Colonic mucosa (tissue), 4 donors: ENCODE measurements at regions of chr1 and their contacts with region 1.

Region 1: DNA sequence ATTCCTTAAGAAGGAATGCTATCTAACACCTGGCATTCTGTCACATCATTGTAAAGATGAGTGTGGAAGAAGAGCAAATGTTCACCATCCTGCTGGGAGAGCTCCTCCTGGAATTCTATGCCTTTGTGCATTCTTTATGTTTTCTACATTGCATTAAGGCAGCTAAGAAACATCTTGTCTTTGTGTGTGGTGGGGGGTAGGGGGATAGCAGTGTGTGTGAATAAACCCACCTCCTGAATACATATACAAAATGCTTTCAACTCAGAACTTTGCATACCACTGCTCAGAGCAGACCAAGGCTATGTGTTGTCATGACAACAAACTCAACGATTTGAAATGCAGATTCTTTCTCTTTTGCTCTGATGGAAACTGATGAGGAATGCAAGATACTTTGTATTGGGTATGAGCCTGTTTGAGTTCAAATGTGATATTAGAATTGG is 193.6 kb upstream of the KAZN start:
- DNase-seq: no peak
- H3K4me3 ChIP-seq: no peak overlapping the region
- H3K27ac ChIP-seq: no peak overlapping the region
- H3K4me1 ChIP-seq: no peaks in the 10 kb centered on the region
- H3K27me3 ChIP-seq: no peaks in the 10 kb centered on the region
- CTCF ChIP-seq: no peak

Region 2: DNA sequence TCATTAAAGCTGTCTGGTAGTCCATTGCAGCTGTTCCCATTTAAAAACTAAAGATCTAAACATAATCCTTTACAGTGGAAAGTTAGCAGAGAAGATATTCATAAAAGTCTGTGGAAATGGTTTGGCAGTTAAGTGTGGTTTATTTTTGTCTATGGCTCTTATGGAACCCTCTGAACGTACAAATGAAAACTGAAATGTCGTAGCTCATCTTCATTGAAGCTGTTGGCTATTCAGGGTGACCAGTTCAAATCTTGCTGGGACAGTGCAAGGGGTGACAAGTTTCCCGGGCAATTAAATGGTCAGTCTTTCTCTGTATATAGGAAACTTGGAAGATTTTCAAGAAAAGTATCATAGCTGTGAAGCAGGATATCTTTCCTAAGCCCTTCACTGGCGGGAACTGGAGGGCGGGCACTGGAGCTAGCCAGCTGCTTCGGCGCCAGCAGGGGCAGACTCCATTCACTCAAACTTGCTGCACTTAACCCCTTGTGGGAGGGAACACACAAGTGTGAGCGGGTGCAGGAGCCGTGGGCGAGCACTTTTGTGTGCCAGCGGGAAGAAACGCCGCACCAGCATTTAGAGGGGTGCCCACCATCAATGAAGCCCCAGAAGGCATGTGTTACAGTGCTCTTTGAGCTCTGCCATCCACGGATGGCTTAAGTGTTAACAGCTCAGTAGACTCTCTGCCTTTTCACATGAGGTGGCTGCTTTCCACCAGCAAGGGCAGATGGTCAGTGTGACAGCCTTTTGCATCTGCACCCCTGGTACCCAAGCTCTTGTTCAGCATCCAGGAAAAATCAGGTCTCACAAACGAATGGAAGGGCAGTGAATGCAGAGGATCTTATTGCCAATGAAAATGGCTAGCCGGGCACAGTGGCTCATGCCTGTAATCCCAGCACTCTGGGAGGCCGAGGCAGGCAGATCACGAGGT is 38.5 kb before region 1 on chr1:
- intact Hi-C with region 1: no loop called
- DNase-seq: no peak
- H3K4me3 ChIP-seq: no peak overlapping the region
- H3K27ac ChIP-seq: no peak overlapping the region
- H3K4me1 ChIP-seq: no peaks in the 10 kb centered on the region
- H3K27me3 ChIP-seq: no peaks in the 10 kb centered on the region
- CTCF ChIP-seq: no peak

Region 3: DNA sequence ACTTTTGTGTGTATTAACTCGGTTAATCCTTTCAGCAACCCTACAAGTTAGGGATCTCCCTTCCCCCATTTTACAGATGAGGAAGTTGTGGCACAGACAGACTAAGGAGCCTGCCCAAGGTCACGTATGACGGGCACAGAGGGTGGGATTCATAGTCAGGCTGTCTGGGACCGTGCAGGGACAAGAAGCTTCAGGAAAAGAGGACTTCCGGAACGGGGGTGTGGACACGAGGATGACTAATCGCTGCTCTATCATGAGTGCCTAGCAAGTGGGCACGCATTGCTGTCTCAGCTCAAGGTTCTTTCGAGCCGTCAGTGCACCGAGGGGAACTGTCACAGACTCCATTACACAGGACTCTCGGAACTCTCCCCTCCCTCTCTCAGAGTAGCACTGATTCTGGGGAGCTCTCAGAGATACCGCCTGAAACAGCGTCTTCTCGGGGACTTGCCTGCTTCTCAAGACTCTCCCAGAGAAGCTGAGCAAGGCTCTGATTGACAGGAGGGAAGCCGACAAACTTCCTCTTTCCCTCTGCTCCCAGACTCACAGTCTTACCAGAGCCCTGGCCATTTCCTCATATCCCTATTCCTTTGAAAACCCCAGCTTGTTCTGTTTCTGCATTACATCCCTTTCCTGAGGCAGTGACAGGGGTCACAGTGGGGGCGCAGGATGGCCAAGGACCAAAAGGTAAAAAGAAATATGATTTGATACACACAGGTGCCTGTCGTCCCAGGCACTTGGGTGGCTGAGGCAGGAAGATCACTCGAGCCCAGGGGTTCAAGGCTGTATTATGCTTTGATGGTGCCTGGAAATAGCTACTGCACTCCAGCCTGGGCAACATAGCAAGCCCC is 856.5 kb after region 1 on chr1:
- intact Hi-C with region 1: loop called (anchors 5 kb)
- DNase-seq: peak; percentile 53
- H3K4me3 ChIP-seq: no peak overlapping the region
- H3K27ac ChIP-seq: peak overlapping the region; percentile 45
- H3K4me1 ChIP-seq: no peaks in the 10 kb centered on the region
- H3K27me3 ChIP-seq: no peaks in the 10 kb centered on the region
- CTCF ChIP-seq: no peak